Activated T-helper 1 cell treated with anti-CD3 and anti-CD28 coated beads, Interleukin-12 subunit alpha, Interleukin-12 subunit beta, Interleukin-2, Interleukin-4 antibody, amounts not matched to agents 30 ng/mL and 10 ng/mL and 1 ng/mL, durations not matched to agents 14 hours and 24 hours and 36 hours (primary cell): ENCODE measurements at regions of chr19 and their contacts with region 1.

Region 1: DNA sequence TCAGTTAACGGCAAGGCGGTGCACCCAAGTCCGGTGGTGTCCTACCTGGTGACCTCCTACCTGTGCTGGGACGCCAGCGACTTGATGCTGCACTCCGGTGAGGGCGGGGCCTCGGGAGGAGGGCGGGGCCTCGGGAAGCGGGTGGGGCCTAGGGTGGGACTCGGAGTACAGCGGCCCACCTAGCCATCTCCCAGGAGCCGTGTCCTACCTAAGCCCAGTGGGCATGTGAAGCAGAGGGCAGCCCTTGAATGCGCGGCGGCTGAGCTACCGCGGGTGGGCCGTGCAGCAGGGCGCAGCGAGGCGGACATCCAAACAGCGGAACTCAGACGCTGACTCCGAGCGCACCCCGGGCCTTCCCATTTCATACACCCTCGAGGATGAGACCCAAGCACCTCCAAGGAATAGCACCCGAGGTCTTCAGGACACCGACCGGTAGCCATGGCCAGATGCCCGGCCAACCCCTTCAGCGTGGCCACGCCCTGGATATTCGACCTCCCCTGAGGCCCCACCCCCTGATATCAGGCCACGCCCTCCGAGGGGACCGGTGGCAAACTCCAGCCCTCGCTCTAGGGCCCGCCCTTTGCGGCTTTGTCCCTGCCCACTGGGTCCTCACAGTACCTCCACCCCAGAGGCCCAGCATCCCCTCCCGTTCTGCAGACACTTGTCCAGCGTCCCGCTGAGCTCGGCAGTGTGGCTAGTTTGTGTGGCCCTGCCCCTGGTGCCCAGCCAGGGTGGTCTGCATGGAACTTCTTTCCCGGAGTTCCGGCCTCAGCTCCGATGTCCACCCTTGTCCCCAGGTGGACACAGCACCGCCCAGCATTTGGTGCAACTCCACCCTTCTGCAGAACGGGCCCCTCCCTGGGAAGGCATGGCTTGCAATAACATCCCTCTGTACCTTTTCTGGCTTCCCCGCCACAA is 5.4 kb downstream of the KLK1 start:
- DNase-seq: peak; percentile 56
- H3K4me3 Mint-ChIP-seq: peak overlapping the region; percentile 77
- H3K27ac Mint-ChIP-seq: peak overlapping the region; percentile 77
- H3K4me1 Mint-ChIP-seq: peaks cover 41% of the 10 kb centered on the region
- H3K27me3 Mint-ChIP-seq: peaks cover 39% of the 10 kb centered on the region

Region 2: DNA sequence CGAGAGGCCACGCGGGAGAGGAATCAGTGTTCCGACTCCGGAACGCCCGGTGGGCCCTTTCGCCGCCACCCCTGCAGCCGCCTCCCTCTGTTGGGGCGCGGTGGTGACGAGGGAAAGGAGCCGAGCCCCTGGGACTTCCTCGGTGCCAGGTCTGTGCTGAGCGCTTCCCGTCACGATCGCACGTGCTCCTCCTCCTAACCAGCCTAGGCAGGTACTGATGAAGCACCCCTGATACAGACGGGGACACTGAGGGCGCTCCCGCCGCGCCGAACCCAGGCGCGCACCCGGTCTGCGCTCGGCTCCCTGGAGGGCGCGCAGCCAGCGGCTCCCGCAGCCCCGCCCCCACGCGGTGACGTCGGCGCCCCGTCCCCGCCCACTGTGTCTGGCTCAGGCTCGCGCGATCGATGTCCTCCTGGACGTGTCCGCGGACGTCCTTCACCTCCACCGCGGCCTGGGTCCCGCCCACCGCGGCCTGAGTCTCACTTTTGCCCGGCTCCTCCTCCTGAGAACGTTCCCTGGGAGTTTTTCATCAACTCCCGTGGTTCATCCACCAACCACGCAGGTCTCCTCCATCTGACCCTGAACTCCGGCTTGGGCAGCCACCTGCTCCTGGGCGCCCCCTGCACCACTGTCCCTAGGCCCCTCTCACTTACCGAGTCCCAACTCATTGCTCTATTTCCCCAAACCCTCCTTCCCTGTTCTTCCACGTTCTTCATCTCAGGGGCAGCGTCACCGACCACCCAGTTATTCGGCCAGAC is 17.8 kb after region 1 on chr19:
- intact Hi-C with region 1: loop called (anchors 1 kb)
- DNase-seq: peak; percentile 78
- H3K4me3 Mint-ChIP-seq: peak overlapping the region; percentile 84
- H3K27ac Mint-ChIP-seq: no peak overlapping the region
- H3K4me1 Mint-ChIP-seq: peaks cover 16% of the 10 kb centered on the region
- H3K27me3 Mint-ChIP-seq: peaks cover 31% of the 10 kb centered on the region